IMR-90 (cell line): ENCODE measurements at regions of chr7 and their contacts with region 1.

Region 1: GRCh38 chr7:29352062-29352461 is 157.5 kb downstream of the CHN2 start:
- DNase-seq: no peak
- ATAC-seq: no peak
- H3K4me3 ChIP-seq: no peak overlapping the region
- H3K27ac ChIP-seq: no peak overlapping the region
- H3K4me1 ChIP-seq: no peaks in the 10 kb centered on the region
- H3K27me3 ChIP-seq: no peaks in the 10 kb centered on the region
- CTCF ChIP-seq: no peak
- POLR2A ChIP-seq: no peak
- RAD21 ChIP-seq: no peak

Region 2: DNA sequence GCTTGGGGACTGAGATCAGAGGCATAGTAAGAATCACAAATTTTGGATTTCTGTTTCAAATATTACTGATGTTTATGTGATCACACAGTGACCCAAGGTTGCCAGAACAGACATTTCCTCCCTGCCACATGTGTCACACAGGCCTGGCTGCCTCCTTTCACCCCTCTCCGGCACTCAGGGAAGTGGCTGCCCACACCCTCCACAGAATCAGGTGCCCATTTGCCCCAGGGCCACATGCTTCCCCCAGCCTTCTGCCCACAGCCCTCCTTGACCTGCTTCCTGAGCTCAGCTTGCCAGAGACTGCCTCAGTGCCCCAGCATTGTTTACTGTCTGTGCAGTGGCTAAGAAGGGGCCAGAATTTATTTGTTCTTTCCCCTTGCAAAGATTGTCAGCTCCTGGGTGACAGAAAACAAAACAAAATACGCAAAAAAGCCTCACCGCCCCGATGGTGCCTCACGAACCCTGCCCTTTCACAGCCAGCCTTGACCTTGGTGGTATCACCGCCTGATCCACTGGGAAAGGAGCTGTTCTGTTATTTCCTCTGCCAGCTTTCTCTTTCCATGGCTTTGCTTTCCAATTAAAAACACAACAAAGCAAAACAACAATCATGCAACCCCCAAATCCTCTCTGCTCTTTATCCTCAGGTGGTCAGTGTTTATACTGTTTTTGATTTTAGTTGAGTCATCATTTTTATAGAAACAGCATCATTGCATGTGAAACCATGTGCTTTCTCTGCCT is 104.7 kb before region 1 on chr7:
- CTCF ChIA-PET with region 1: no interaction called
- POLR2A ChIA-PET with region 1: interaction called, 12 read pairs
- dilution Hi-C with region 1: no loop called
- in situ Hi-C with region 1: no loop called
- intact Hi-C with region 1: no loop called
- DNase-seq: no peak
- ATAC-seq: no peak
- H3K4me3 ChIP-seq: no peak overlapping the region
- H3K27ac ChIP-seq: no peak overlapping the region
- H3K4me1 ChIP-seq: no peaks in the 10 kb centered on the region
- H3K27me3 ChIP-seq: no peaks in the 10 kb centered on the region
- CTCF ChIP-seq: no peak
- POLR2A ChIP-seq: no peak
- RAD21 ChIP-seq: no peak